ENCODE measurements at regions of chr11 and their contacts with region 1.

Region 1: DNA sequence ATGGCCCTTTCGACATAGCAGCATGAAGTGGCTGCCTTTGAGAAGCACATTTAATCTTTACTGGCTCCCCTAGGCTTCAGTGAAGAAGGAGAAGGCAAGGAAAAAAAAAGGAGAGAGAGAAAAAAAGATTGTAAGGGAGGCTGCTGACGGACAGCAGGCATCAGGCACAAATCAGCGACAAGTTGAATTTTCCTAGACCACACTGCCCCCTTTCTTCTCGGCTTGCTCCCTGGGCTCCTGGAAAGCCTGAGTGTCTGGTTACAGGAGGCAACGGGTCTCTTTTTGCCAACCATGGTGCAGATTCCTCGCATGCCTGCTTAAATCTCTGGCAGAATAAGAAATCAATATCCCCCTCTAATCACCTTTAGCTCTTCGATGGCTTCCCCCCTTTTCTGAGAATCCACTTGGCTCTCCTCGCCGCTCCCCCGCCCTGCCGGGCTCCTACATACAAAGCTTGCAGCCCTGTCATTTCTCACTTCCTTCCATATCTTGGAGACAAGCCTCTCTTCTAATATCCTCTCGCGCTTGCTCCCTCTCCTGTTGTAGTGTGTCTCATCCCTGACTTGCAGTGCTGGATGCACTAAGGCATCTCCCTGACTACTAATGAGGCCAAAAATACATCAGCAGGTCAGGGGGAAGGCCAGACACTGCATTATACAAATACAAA is 14.3 kb downstream of the BLID start:
- DNase-seq: peak; percentile 89
- H3K4me3 ChIP-seq: peak overlapping the region in 2 of 3 experiments; percentile 69 to 70
- H3K27ac ChIP-seq: peak overlapping the region; percentile 71
- H3K4me1 ChIP-seq: peaks cover 74% of the 10 kb centered on the region
- H3K27me3 ChIP-seq: no peaks in the 10 kb centered on the region
- CTCF ChIP-seq: peak; percentile 45 to 64
- POLR2A ChIP-seq: no peak

Region 2: DNA sequence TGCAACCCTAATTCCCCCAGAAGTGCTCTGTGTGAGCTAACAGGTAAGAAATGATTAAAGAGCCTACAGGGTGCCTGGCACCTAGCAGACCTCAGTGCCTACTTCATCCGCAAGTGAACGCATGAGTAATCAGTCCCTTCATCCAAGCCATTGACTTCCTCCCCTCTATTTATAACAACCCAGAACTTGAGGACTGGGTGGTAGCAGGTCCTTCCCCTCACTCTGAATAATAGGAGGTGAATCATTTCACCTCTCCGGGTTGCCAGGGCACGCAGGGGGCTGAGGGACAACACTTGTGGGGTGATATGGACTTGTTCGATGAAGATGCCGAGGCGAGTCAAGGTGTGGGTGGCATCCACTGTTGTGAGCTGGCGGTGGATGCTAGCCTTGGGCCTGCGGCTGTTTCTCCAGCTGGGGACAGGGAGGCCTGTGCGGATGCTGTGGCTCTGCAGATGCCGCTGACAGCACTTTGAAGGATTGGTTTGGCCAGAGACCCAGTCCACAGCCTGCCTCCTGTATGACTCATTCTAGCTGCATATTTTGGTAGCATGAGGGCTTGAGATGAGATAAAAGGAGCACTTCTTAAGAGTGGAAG is 637.3 kb before region 1 on chr11:
- CTCF ChIA-PET with region 1: no interaction called
- POLR2A ChIA-PET with region 1: no interaction called
- dilution Hi-C with region 1: no loop called
- intact Hi-C with region 1: loop called (anchors 5 kb)
- DNase-seq: peak; percentile 58
- H3K4me3 ChIP-seq: no peak overlapping the region
- H3K27ac ChIP-seq: peak overlapping the region; percentile 3
- H3K4me1 ChIP-seq: peaks cover 32% of the 10 kb centered on the region
- H3K27me3 ChIP-seq: peaks cover 0 to 2% of the 10 kb centered on the region in 2 experiments
- CTCF ChIP-seq: no peak
- POLR2A ChIP-seq: no peak

Region 3: GRCh38 chr11:121722431-121723245 is 379.1 kb before region 1 on chr11:
- CTCF ChIA-PET with region 1: no interaction called
- POLR2A ChIA-PET with region 1: no interaction called
- dilution Hi-C with region 1: no loop called
- intact Hi-C with region 1: loop called (anchors 2 kb)
- DNase-seq: peak; percentile 94
- H3K4me3 ChIP-seq: peak overlapping the region; percentile 21 to 59 (median 31)
- H3K27ac ChIP-seq: peak overlapping the region; percentile 59
- H3K4me1 ChIP-seq: peaks cover 25% of the 10 kb centered on the region
- H3K27me3 ChIP-seq: peaks cover 3 to 5% of the 10 kb centered on the region in 2 experiments
- CTCF ChIP-seq: no peak
- POLR2A ChIP-seq: no peak

Region 4: DNA sequence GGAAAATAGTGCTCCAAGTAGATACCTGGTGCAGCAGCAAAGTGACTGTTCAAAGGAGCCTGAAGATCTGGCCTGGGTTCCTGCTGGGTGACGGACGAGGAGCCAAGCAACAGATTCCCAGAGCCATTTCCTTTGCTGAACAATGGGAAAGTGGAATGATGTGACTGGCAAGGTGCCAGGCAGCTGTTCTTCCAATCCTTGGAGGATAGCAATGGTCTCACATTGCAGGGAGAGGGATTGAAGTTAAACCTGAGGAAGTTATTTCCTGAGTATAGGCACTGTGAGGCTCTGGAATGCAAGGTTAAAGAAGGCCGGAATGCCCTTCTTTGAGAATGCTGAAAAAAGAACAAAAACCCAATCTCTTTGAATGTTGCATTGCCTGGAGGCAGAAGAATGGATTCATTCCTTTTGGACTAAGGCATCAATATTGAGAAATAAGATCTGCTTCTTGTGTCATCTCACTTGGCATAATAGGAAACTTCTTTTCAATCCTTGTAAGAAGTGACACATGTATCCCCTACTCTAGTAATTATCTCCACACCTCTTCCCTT is 209.6 kb before region 1 on chr11:
- CTCF ChIA-PET with region 1: no interaction called
- POLR2A ChIA-PET with region 1: no interaction called
- dilution Hi-C with region 1: no loop called
- intact Hi-C with region 1: loop called (anchors 5 kb)
- DNase-seq: peak; percentile 87
- H3K4me3 ChIP-seq: no peak overlapping the region
- H3K27ac ChIP-seq: no peak overlapping the region
- H3K4me1 ChIP-seq: peaks cover 12% of the 10 kb centered on the region
- H3K27me3 ChIP-seq: peaks cover 3 to 4% of the 10 kb centered on the region in 2 experiments
- CTCF ChIP-seq: no peak
- POLR2A ChIP-seq: no peak

Region 5: GRCh38 chr11:122020902-122021301 is 80.9 kb before region 1 on chr11:
- CTCF ChIA-PET with region 1: interaction called, 43 read pairs
- POLR2A ChIA-PET with region 1: no interaction called
- dilution Hi-C with region 1: no loop called
- intact Hi-C with region 1: loop called (anchors 1 kb)
- DNase-seq: peak; percentile 46
- H3K4me3 ChIP-seq: no peak overlapping the region
- H3K27ac ChIP-seq: no peak overlapping the region
- H3K4me1 ChIP-seq: no peaks in the 10 kb centered on the region
- H3K27me3 ChIP-seq: no peaks in the 10 kb centered on the region
- CTCF ChIP-seq: peak; percentile 38 to 57
- POLR2A ChIP-seq: no peak

Region 6: DNA sequence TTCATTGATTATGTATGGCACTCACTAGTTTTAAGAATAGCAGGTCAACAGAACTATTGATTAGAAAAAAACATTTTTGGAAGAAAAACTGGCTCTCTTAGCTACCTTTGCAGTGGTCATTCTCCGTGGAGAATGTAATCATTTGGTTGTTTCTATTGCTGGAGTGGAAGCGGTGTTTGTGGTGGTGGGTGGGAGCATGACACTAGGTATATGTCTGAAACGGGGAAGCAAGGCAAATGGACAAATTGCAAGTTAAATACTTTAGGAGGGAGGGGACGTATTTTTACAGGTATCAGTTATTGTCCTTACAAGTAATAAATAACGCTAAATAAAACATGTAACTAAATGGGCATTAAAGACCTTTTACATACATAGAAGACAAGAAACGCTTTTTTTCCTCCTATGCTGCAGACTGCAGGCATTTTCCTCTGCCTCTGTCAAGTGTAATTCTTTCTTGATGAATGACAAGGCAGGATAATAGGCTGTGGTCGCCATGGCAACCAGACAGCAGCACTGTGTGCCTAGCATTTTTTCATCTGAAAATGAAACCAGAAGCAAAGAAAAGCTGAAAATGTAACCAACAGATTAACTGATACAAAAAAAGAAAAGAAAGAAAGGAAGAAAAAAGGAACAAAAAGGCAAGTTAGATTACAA is 31.9 kb before region 1 on chr11:
- CTCF ChIA-PET with region 1: no interaction called
- POLR2A ChIA-PET with region 1: no interaction called
- dilution Hi-C with region 1: no loop called
- intact Hi-C with region 1: loop called (anchors 2 kb)
- DNase-seq: peak; percentile 93
- H3K4me3 ChIP-seq: no peak overlapping the region
- H3K27ac ChIP-seq: no peak overlapping the region
- H3K4me1 ChIP-seq: peaks cover 11% of the 10 kb centered on the region
- H3K27me3 ChIP-seq: no peaks in the 10 kb centered on the region
- CTCF ChIP-seq: no peak
- POLR2A ChIP-seq: no peak

Region 7: DNA sequence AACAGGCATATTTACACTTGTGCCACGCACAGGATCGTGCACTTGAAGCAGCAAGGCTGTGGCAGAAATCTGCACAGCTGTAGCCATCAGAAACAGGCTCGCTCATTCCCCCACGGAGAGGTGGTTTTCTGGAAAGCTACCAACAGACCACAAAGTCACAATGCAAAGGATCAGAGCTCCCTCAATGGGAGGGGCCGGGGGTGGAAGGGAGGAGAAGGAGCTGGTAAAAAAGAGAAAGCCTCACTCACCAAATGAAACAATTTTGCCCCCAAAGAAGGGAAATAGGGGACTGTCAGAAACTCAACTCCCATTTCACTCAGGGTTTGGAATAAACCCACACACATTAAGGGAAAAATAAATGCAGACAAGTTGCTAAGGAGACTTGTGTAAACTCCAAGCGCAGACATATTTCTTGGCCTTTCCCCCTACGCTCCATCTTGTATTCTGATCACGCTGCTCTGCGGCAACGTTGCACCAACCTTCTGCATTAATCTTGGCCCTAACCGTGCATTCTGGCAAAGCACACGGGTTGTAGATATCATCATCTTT is 57.5 kb after region 1 on chr11:
- CTCF ChIA-PET with region 1: interaction called, 4 read pairs
- POLR2A ChIA-PET with region 1: no interaction called
- dilution Hi-C with region 1: no loop called
- intact Hi-C with region 1: loop called (anchors 1 kb)
- DNase-seq: peak; percentile 29
- H3K4me3 ChIP-seq: no peak overlapping the region
- H3K27ac ChIP-seq: peak overlapping the region; percentile 82
- H3K4me1 ChIP-seq: peaks cover 68% of the 10 kb centered on the region
- H3K27me3 ChIP-seq: no peaks in the 10 kb centered on the region
- CTCF ChIP-seq: no peak
- POLR2A ChIP-seq: no peak

Region 8: DNA sequence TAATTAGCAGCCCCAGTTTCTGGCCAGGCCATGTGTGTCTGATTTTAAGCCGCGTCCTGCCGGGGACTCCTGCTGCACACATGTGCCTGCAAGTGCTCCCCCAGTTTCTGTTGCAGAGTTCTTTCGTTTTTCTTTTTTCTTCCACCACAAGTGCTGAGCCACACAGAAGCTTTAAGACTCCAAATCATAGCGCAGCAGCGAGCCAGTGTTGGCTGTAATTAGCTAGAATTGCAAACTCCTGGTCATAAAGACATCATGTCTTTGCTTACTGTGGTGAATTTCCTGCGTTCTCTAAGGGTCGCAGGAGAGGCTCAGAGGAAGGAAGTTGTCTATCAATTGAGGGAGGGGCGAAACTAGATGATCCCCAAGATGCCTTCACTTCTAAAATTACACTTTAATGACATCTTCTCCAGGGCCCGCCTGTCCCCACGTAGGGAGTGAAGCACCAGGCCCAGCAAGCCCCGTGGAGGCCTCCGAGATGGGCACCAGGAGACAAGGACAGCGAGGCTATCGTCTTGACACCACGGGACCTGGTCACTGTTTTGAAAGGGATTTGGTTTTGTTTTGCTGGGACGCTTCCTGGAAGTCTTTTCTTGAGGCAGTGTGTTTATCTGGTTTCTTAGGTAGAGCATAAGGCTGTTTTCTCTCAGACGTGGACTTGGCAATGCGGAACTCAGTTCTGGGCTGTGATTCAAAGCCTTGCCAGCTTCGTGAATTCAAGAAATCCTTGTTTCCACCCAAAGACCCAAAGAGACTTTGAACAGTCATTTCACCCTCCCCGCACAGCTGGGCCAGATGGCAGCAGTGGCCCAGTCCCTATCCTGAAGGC is 625.6 kb after region 1 on chr11:
- CTCF ChIA-PET with region 1: no interaction called
- POLR2A ChIA-PET with region 1: no interaction called
- dilution Hi-C with region 1: no loop called
- intact Hi-C with region 1: no loop called
- DNase-seq: peak; percentile 34
- H3K4me3 ChIP-seq: no peak overlapping the region
- H3K27ac ChIP-seq: no peak overlapping the region
- H3K4me1 ChIP-seq: peaks cover 39% of the 10 kb centered on the region
- H3K27me3 ChIP-seq: no peaks in the 10 kb centered on the region
- CTCF ChIP-seq: no peak
- POLR2A ChIP-seq: no peak

Measured in endothelial cell of umbilical vein (primary cell).